MCF 10A (cell line): ENCODE measurements at regions of chr1 and their contacts with region 1.

Region 1: DNA sequence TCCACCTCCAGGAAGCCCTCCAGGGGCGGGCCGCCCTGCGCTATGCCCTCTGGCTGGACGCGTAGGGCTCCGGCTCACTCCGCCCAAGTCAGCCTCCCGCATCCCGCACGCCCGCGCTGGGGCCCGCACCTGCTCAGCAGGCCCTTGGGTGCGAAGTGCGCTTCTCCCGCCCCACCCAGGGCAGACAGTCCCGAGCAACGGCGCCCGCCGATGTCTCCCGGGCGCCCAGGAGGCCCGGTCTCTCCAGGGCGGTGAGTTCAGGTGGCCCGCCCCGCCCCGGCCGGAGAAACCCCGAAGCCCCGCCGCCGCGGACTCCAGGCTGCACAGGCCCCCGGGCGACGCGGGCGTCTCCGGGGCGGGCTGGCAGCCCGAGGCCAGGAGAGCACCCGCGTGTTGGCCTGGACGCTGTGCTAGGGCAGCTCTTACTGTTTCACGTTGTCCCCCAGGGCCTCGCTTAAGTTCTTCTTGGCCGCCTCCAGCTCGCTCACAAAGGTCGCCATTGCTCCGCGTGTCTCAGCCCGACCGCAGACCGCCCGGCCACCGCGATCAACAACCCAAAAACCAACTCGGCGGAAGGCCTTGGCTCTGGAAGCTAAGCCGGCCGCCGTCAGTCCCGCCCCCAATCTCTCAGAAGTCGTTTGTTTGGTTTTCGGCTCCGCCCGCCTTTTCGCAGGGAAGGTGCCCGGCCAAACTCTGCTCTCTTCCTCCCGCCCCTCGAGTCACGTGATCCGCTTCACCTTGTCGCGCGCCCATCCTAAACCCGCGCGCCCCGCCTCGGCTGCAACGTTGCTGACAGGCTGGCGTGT is at the start of gene TADA1:
- DNase-seq: peak; percentile 100
- H3K4me3 Mint-ChIP-seq: peak within 1 kb of the TSS; percentile 92
- H3K27ac Mint-ChIP-seq: peak within 1 kb of the TSS; percentile 95
- H3K4me1 Mint-ChIP-seq: peaks cover 38% of the 10 kb centered on the region
- H3K27me3 Mint-ChIP-seq: no peaks in the 10 kb centered on the region
- CTCF ChIP-seq: no peak
- total RNA-seq, gene TADA1: 14.7 and 15.9 TPM in 2 replicates

Region 2: GRCh38 chr1:166013232-166013631 is 862.7 kb before region 1 on chr1:
- CTCF ChIA-PET with region 1: no interaction called
- POLR2A ChIA-PET with region 1: no interaction called
- intact Hi-C with region 1: no loop called
- DNase-seq: no peak
- H3K4me3 Mint-ChIP-seq: no peak overlapping the region
- H3K27ac Mint-ChIP-seq: no peak overlapping the region
- H3K4me1 Mint-ChIP-seq: no peaks in the 10 kb centered on the region
- H3K27me3 Mint-ChIP-seq: peaks cover 19% of the 10 kb centered on the region
- CTCF ChIP-seq: no peak

Region 3: DNA sequence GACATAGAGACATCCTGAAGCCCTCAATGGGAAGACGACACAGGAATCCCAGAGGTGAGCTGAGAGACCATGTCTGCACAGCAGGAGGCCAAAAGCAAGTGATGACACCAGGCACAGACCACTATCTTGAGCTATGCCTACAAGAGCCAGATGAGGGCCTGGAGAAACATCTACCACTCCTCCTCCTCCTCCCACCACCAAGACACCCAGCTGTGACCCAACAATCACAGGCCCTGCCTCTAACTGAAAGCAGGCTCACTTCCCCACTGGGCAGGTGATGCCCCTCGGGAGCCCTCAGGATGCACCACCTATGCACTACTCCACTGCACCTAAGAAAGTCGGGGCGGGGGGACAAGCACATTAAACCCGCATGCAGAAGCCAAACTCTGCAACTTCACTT is 16.3 kb before region 1 on chr1:
- CTCF ChIA-PET with region 1: interaction called, 4 read pairs
- POLR2A ChIA-PET with region 1: interaction called, 11 read pairs
- intact Hi-C with region 1: no loop called
- DNase-seq: no peak
- H3K4me3 Mint-ChIP-seq: no peak overlapping the region
- H3K27ac Mint-ChIP-seq: no peak overlapping the region
- H3K4me1 Mint-ChIP-seq: no peaks in the 10 kb centered on the region
- H3K27me3 Mint-ChIP-seq: no peaks in the 10 kb centered on the region
- CTCF ChIP-seq: no peak